ENCODE measurements at regions of chr5 and their contacts with region 1.

Region 1: DNA sequence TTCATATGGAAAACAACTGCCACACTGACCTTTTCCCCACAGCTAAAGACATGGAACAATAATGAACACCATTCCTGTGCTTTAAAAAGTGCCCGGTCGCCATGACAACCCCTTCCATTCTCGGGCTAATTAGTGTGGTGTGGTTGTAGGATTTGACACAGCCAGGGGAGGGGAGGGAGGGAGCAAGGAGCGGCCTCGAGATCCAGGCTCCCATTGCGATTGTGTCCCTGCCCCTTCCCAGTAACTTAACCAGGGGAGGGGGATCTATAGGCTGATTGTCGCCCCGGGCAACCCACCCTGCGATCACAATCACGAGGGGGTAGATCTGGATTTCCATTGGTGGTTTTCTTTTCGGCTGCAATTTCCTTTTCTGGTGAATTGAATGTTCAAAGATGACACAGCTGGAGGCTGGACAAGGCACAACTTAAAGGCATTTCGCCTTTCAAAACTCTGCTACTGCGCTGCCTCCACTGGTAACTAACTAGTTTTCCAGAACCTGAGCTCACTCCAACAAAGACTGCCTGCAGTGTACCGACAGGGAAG is 96.7 kb upstream of the RETREG1 start:
- DNase-seq: no peak
- H3K4me3 ChIP-seq: no peak overlapping the region
- H3K4me3 Mint-ChIP-seq: no peak overlapping the region
- H3K27ac Mint-ChIP-seq: peak overlapping the region; percentile 16
- H3K4me1 ChIP-seq: peaks cover 5% of the 10 kb centered on the region; the same call in 1 of the 2 replicates
- H3K4me1 Mint-ChIP-seq: no peaks in the 10 kb centered on the region
- H3K27me3 ChIP-seq: no peaks in the 10 kb centered on the region
- H3K27me3 Mint-ChIP-seq: no peaks in the 10 kb centered on the region
- CTCF ChIP-seq: peak in 1 of 2 experiments; percentile 2

Region 2: GRCh38 chr5:16791036-16791705 is 77.7 kb after region 1 on chr5:
- CTCF ChIA-PET with region 1: no interaction called
- POLR2A ChIA-PET with region 1: interaction called, 11 read pairs
- intact Hi-C with region 1: no loop called
- DNase-seq: peak in 1 of 2 experiments; percentile 63
- H3K4me3 ChIP-seq: no peak overlapping the region
- H3K4me3 Mint-ChIP-seq: no peak overlapping the region
- H3K27ac Mint-ChIP-seq: no peak overlapping the region
- H3K4me1 ChIP-seq: no peaks in the 10 kb centered on the region
- H3K4me1 Mint-ChIP-seq: no peaks in the 10 kb centered on the region
- H3K27me3 ChIP-seq: no peaks in the 10 kb centered on the region; the same call in 1 of the 2 replicates
- H3K27me3 Mint-ChIP-seq: no peaks in the 10 kb centered on the region
- CTCF ChIP-seq: peak; percentile 65 to 73